IMR-90 (cell line): ENCODE measurements at regions of chr3 and their contacts with region 1.

Region 1: DNA sequence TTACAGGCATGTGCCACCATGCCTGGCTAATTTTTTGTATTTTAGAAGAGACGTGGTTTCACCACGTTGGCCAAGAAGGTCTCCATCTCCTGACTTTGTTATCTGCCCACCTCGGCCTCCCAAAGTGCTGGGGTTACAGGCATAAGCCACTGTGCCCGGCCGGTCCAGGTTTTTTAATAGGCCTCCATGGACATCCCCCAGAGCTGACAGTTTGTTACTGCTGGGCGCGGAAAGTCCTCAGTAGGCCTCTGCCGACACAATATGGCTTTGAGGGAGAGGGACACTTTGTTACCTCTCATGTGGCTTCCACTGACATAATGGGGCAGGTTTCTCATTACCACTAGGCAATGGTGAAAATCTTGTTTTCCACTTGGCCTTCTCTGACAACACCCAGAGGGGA is 152.0 kb downstream of the WNT7A start:
- DNase-seq: no peak
- ATAC-seq: no peak
- H3K4me3 ChIP-seq: no peak overlapping the region
- H3K27ac ChIP-seq: no peak overlapping the region
- H3K4me1 ChIP-seq: no peaks in the 10 kb centered on the region
- H3K27me3 ChIP-seq: no peaks in the 10 kb centered on the region
- CTCF ChIP-seq: no peak
- POLR2A ChIP-seq: no peak
- RAD21 ChIP-seq: no peak

Region 2: DNA sequence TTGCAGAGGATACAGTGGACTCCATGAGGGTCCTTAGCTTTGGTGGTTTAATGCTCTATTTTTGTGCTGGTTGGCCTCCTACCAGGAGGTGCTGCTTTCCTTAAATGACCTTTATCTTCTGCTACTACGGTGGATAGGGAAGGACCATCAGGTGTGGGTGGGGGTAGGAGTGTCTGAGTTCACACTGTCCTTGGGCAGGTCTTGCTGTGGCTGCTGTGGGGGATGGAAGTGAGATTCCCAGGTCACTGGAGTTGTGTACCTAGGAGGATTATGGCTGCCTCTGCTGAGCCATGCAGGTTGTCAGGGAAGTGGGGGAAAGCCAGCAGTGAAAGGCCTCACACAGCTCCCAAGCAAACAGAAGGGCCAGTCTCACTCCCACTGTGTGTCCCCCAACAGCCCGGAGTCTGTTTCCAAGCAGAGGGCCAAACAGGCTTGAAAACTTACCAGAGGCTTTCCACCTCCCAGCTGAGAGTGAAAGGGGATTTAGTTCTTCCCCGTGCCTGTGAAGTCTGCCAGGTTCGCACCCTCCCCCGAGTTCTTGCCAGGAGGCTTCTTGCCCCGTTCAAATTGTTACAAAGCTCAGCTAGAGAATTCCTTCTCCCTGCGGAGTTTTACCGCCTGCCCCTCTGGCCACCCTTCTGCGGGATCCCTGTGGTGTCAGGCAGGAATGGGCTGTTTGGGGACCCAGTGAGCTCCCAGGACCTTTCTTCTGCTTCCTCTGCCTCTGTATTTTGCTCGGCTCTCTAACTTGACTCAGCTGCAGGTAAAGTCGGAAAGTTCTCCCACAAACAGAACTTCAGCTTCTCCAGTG is 219.9 kb after region 1 on chr3:
- CTCF ChIA-PET with region 1: no interaction called
- POLR2A ChIA-PET with region 1: no interaction called
- dilution Hi-C with region 1: no loop called
- in situ Hi-C with region 1: no loop called
- intact Hi-C with region 1: loop called (anchors 5 kb)
- DNase-seq: no peak
- ATAC-seq: no peak
- H3K4me3 ChIP-seq: no peak overlapping the region
- H3K27ac ChIP-seq: no peak overlapping the region
- H3K4me1 ChIP-seq: no peaks in the 10 kb centered on the region
- H3K27me3 ChIP-seq: no peaks in the 10 kb centered on the region
- CTCF ChIP-seq: no peak
- POLR2A ChIP-seq: no peak
- RAD21 ChIP-seq: no peak